OCI-LY7 (cell line): ENCODE measurements at regions of chr4 and their contacts with region 1.

Region 1: DNA sequence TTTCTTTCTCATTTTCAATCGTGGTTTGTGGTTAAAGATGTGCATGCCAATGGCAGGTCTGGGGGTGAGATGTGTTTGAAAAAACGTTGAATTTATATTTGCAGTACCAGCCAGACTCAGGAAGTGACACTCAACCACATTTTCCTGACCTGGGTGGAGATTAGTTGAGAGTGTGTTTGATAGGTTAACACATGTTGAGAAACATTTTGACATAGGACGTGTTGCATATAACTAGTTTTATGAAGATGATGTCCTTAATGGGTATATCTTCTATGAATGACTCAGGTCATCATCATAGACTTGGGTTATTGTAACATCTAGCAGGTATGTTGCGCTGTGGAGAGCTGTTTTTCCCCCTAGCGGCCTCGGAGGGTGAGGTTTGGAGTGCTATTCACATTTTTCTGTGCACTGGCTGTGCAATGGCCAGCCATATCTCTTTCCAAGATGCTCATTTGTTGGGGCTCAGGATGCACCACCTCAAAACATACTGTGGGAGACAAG is 21.7 kb upstream of the CD38 start:
- DNase-seq: peak; percentile 67
- H3K4me3 ChIP-seq: peak overlapping the region; percentile 51
- H3K27ac ChIP-seq: peak overlapping the region; percentile 57
- H3K4me1 ChIP-seq: peaks cover 39% of the 10 kb centered on the region
- CTCF ChIP-seq: peak; percentile 70

Region 2: GRCh38 chr4:15043922-15044321 is 712.5 kb before region 1 on chr4:
- CTCF ChIA-PET with region 1: no interaction called
- POLR2A ChIA-PET with region 1: no interaction called
- intact Hi-C with region 1: no loop called
- DNase-seq: no peak
- H3K4me3 ChIP-seq: no peak overlapping the region
- H3K27ac ChIP-seq: no peak overlapping the region
- H3K4me1 ChIP-seq: no peaks in the 10 kb centered on the region
- CTCF ChIP-seq: no peak

Region 3: GRCh38 chr4:15744016-15744545 is 12.3 kb before region 1 on chr4:
- CTCF ChIA-PET with region 1: interaction called, 6 read pairs
- POLR2A ChIA-PET with region 1: interaction called, 14 read pairs
- intact Hi-C with region 1: no loop called
- DNase-seq: no peak
- H3K4me3 ChIP-seq: no peak overlapping the region
- H3K27ac ChIP-seq: no peak overlapping the region
- H3K4me1 ChIP-seq: no peaks in the 10 kb centered on the region
- CTCF ChIP-seq: no peak

Region 4: DNA sequence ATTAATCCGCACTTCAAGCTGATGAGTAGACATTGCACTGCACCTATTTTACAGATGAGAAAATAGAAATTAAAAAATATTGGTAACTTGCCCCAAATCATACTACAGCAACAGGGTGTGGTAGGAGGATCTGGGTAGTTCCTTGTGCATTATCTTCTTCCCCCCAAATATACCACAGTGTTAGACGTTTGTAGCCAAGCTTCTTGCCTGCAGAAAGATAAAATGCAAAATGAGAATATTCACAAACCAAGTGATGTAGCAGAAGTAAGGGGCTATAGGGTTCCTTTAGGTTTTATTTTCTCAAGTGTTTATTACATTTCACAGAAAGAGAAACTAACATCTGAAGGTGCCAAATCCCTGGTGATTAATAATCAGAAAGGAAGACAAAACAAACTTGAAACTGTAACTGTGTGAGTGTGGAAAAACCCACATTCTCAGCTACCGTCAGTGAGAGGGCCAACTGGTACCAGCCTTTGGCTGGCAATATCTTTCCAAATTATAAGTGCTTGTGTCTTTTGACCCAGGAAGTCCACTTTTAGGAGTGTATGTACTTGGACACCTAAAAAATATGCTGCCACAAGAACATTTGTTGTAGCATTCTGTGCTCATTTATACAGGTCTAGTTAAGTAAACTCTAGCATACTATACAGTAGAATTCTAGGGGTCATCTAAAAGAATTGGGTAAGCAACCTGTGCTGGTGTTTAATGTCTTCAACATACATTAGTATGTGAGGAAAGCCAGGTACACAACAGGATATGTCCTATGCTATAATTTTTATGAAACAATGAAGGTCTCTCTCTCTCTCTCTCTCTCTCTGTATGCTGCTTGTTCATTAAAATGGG is 15.0 kb after region 1 on chr4:
- CTCF ChIA-PET with region 1: interaction called, 7 read pairs
- POLR2A ChIA-PET with region 1: interaction called, 35 read pairs
- intact Hi-C with region 1: no loop called
- DNase-seq: no peak
- H3K4me3 ChIP-seq: no peak overlapping the region
- H3K27ac ChIP-seq: no peak overlapping the region
- H3K4me1 ChIP-seq: peaks cover 56% of the 10 kb centered on the region
- CTCF ChIP-seq: no peak

Region 5: GRCh38 chr4:16386711-16387320 is 630.4 kb after region 1 on chr4:
- CTCF ChIA-PET with region 1: no interaction called
- POLR2A ChIA-PET with region 1: no interaction called
- intact Hi-C with region 1: no loop called
- DNase-seq: no peak
- H3K4me3 ChIP-seq: no peak overlapping the region
- H3K27ac ChIP-seq: no peak overlapping the region
- H3K4me1 ChIP-seq: no peaks in the 10 kb centered on the region
- CTCF ChIP-seq: no peak